Activated CD8-positive, alpha-beta memory T cell treated with anti-CD3 and anti-CD28 coated beads, Interleukin-2, amount 10 ng/mL, durations not matched to agents 7 days and 5 days (primary cell): ENCODE measurements at regions of chr2 and their contacts with region 1.

Region 1: GRCh38 chr2:143162123-143162837 is 33.1 kb downstream of the ARHGAP15 start:
- DNase-seq: peak; percentile 58
- ATAC-seq: peak; percentile 90
- H3K4me3 Mint-ChIP-seq: no peak overlapping the region
- H3K27ac Mint-ChIP-seq: no peak overlapping the region
- H3K4me1 Mint-ChIP-seq: peaks cover 49% of the 10 kb centered on the region
- H3K27me3 Mint-ChIP-seq: no peaks in the 10 kb centered on the region

Region 2: GRCh38 chr2:143121079-143121478 is 41.2 kb before region 1 on chr2:
- CTCF ChIA-PET with region 1: no interaction called
- DNase-seq: no peak
- ATAC-seq: no peak
- H3K4me3 Mint-ChIP-seq: no peak overlapping the region
- H3K27ac Mint-ChIP-seq: no peak overlapping the region
- H3K4me1 Mint-ChIP-seq: peaks cover 25% of the 10 kb centered on the region
- H3K27me3 Mint-ChIP-seq: no peaks in the 10 kb centered on the region

Region 3: DNA sequence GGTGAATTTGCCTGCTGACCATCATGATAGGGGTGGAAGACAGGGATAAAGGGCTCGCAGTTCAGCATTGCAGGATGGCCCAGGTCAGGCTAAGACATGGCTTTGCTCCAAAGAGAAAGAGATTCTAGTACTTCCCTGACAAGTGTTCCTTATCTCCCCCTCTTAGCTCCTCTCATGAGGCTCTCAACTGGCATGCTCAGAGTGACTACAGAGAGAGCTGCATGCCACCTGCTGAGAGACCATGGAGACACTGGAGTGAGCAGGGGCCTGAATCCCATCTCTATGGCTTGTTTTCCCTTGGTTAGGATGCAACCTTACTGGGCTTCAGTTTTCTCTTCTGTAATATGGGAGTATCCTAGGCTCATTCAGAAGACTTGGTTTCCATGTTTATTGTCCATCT is 61.3 kb after region 1 on chr2:
- CTCF ChIA-PET with region 1: interaction called, 26 read pairs
- DNase-seq: no peak
- ATAC-seq: no peak
- H3K4me3 Mint-ChIP-seq: no peak overlapping the region
- H3K27ac Mint-ChIP-seq: no peak overlapping the region
- H3K4me1 Mint-ChIP-seq: peaks cover 36% of the 10 kb centered on the region
- H3K27me3 Mint-ChIP-seq: no peaks in the 10 kb centered on the region